Thyroid gland (tissue), 4 donors: ENCODE measurements at regions of chr2 and their contacts with region 1.

Region 1: DNA sequence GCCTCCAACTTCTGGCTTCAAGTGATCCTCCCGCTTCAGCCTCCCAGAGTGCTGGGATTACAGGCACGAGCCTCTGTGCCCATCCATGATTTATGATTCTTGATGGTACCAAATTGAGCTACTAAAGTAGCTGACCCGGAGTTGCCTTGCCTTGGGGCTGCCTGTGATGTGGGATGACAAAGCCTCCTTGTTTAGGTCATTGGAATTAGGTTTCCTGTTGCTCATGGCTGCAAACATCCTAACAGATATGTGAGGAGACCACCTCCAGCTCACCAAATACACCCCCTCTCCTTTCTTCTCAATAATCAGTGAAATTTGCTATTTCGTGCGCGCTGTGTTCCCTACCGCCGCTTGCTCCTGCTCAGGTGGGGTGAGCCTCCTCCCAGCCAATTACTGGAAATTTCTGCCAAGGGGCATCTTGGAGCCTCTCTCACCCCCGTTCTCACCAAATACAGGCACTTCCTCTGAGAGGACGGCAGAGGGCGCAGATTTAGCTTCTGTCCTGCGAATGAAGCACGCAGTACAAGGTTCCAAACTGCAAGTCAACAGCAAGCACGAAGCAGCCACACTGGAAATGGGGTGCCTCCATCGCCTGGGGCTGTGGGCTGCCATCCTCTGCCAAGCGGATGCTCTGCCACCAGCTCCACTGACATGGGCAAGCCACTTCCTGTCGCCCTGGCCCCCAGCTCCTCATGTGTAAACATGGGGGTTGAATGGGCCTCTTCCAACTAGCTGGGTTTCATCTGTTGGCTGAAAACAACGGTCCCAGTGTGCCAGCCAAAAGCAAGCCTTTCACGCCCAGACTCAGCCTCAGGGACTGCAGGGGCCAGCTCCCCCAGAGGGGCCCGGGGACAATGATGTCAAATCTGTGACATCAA is 71.7 kb downstream of the NCAPH start:
- DNase-seq: peak; percentile 51 to 66
- H3K4me3 ChIP-seq: no peak overlapping the region
- H3K27ac ChIP-seq: no peak overlapping the region
- H3K4me1 ChIP-seq: peaks cover 4 to 18% of the 10 kb centered on the region in 2 donors
- H3K27me3 ChIP-seq: no peaks in the 10 kb centered on the region
- CTCF ChIP-seq: peak; percentile 33 to 79 (median 78)
- POLR2A ChIP-seq: no peak

Region 2: GRCh38 chr2:96344011-96344410 is 63.3 kb before region 1 on chr2:
- intact Hi-C with region 1: no loop called
- DNase-seq: no peak
- H3K4me3 ChIP-seq: no peak overlapping the region
- H3K27ac ChIP-seq: no peak overlapping the region
- H3K4me1 ChIP-seq: no peaks in the 10 kb centered on the region
- H3K27me3 ChIP-seq: no peaks in the 10 kb centered on the region
- CTCF ChIP-seq: no peak
- POLR2A ChIP-seq: no peak

Region 3: DNA sequence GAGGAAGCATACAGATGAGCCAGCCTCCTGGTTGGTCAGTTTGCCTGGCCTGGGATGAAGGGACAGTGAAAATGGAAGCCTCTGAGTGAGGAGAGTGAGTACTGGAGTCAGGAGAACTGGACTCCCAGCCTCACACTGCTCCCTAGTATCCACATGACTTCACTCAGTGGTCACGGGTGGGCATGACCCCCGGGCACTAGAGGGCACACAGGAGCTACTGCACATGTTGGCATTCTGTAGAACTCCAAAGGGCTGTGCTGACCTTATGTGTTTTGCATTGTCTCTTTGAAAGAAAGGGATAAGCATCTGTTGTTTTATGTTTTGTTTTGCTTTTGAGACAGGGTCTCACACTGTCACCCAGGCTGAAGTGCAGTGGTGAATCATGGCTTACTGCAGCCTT is 48.0 kb before region 1 on chr2:
- intact Hi-C with region 1: loop called (anchors 10 kb)
- DNase-seq: no peak
- H3K4me3 ChIP-seq: no peak overlapping the region
- H3K27ac ChIP-seq: no peak overlapping the region
- H3K4me1 ChIP-seq: peaks cover 0 to 1% of the 10 kb centered on the region in 2 donors
- H3K27me3 ChIP-seq: no peaks in the 10 kb centered on the region
- CTCF ChIP-seq: no peak
- POLR2A ChIP-seq: no peak

Region 4: DNA sequence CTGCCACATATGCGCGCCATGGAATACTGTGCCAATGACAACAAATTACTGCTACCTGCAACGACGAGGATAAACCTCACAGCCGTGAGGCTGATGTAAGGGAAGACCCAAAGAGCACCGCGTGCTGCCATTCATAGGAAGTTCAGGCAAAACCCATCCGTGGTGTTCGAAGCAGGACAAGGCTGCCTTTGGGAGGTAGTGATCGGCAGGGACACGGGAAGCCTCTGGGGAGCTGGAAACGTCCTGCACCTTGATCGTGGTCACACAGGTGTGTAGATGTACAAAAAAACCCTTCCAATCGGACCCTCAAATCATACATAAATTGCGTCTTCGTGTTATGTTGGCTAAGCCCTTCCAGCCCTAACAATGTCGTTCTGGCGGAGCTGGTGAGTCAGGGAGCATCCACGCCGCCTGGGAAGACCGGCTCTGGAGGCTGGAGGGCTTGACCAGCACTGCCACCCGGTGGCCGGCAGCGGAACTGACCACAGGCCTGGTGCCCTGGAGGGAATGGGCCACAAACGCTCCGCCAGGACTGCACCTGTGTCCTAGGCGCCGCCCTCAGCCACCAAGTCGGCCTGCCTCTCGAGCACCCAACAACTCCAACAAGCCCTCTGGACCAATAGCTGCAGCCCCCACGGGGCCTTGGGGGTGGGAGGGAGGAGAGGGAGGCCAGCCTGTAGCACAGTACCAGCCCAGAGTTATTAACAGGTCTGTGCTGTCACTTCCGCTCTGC is 102.0 kb after region 1 on chr2:
- intact Hi-C with region 1: loop called (anchors 5 kb)
- DNase-seq: peak; percentile 85 to 88
- H3K4me3 ChIP-seq: no peak overlapping the region
- H3K27ac ChIP-seq: no peak overlapping the region
- H3K4me1 ChIP-seq: peaks cover 9 to 17% of the 10 kb centered on the region in 2 donors
- H3K27me3 ChIP-seq: no peaks in the 10 kb centered on the region
- CTCF ChIP-seq: peak; percentile 94 to 100 (median 97)
- POLR2A ChIP-seq: no peak